ENCODE measurements at regions of chr13 and their contacts with region 1.

Region 1: GRCh38 chr13:27219611-27220010 is 31.7 kb upstream of the RPL21 start:
- DNase-seq: no peak
- ATAC-seq: no peak
- H3K4me3 Mint-ChIP-seq: no peak overlapping the region
- H3K27ac Mint-ChIP-seq: no peak overlapping the region
- H3K4me1 Mint-ChIP-seq: peaks cover 39% of the 10 kb centered on the region
- H3K27me3 Mint-ChIP-seq: no peaks in the 10 kb centered on the region
- CTCF ChIP-seq: no peak

Region 2: GRCh38 chr13:27233964-27234363 is 14.4 kb after region 1 on chr13:
- CTCF ChIA-PET with region 1: no interaction called
- POLR2A ChIA-PET with region 1: no interaction called
- intact Hi-C with region 1: loop called (anchors 2 kb)
- DNase-seq: no peak
- ATAC-seq: no peak
- H3K4me3 Mint-ChIP-seq: no peak overlapping the region
- H3K27ac Mint-ChIP-seq: no peak overlapping the region
- H3K4me1 Mint-ChIP-seq: peaks cover 13% of the 10 kb centered on the region
- H3K27me3 Mint-ChIP-seq: no peaks in the 10 kb centered on the region
- CTCF ChIP-seq: no peak